AG04449 (cell line): ENCODE measurements at regions of chr1 and their contacts with region 1.

Region 1: GRCh38 chr1:150168960-150169601 is 19.4 kb downstream of the PLEKHO1 start:
- DNase-seq: no peak
- H3K4me3 ChIP-seq: no peak overlapping the region
- CTCF ChIP-seq: peak; percentile 85

Region 2: GRCh38 chr1:150149271-150150132 is 19.6 kb before region 1 on chr1 and contains the start of gene PLEKHO1:
- CTCF ChIA-PET with region 1: interaction called, 26 read pairs
- POLR2A ChIA-PET with region 1: interaction called, 3 read pairs
- DNase-seq: no peak
- H3K4me3 ChIP-seq: peak within 1 kb of the TSS; percentile 77
- CTCF ChIP-seq: no peak

Region 3: GRCh38 chr1:150363426-150364230 is 194.5 kb after region 1 on chr1 and contains the start of gene RPRD2:
- CTCF ChIA-PET with region 1: no interaction called
- POLR2A ChIA-PET with region 1: no interaction called
- DNase-seq: peak; percentile 94
- H3K4me3 ChIP-seq: peak within 1 kb of the TSS; percentile 74
- CTCF ChIP-seq: no peak

Region 4: GRCh38 chr1:150629115-150629928 is 460.2 kb after region 1 on chr1 and contains the start of gene ENSA:
- CTCF ChIA-PET with region 1: no interaction called
- POLR2A ChIA-PET with region 1: no interaction called
- DNase-seq: peak; percentile 99
- H3K4me3 ChIP-seq: peak within 1 kb of the TSS; percentile 75
- CTCF ChIP-seq: no peak